ENCODE measurements at regions of chr10 and their contacts with region 1.

Region 1: GRCh38 chr10:104209575-104210198 is 22.5 kb downstream of the CFAP43 start:
- DNase-seq: no peak
- H3K4me3 ChIP-seq: no peak overlapping the region
- H3K27ac ChIP-seq: no peak overlapping the region
- H3K4me1 ChIP-seq: no peaks in the 10 kb centered on the region
- H3K27me3 ChIP-seq: no peaks in the 10 kb centered on the region
- CTCF ChIP-seq: peak; percentile 69

Region 2: DNA sequence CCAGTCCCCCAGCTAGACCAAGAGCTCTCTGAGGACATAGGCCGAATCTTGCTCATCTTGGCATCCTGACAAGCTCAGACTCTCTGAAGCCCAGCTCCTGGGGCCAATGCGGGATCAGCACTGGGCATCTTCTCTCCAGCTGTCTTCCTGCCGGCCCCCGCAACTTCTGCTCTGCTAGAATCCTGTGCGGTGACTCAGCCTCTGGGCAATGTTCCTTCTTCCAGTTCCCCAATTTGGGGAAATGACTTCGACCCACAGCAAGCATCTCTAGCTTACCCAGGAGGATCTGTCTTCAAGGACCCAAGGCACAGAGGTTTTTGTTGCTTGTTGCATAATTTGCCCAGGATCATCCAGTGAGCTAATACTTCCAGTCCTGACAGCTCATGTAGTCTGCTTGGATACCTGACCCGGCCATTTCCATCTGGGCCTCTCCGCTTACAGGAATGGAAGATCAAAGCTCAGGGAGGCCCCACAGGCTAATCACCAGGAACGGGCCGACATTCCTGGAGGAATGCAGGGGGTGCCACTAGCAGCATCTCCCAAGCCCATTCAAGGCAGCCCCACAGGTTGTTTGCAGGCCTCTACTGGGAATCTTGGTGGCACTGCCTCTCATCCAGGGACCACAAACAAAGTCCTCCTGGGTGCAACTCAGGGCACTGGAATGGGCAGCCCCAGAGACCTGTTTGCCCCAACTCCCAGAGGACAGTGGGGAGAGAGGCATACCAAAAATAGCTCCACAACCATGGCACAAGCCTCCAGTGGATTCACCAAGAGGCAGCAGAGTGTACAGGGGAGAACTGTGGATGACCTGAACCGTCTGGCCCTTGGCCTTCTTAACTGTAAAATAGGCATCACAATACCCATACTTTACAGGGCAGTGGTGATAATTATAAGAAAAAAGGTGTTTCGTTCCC is 564.3 kb before region 1 on chr10:
- intact Hi-C with region 1: no loop called
- DNase-seq: peak; percentile 53
- H3K4me3 ChIP-seq: no peak overlapping the region
- H3K27ac ChIP-seq: peak overlapping the region; percentile 44
- H3K4me1 ChIP-seq: peaks cover 75% of the 10 kb centered on the region
- H3K27me3 ChIP-seq: no peaks in the 10 kb centered on the region
- CTCF ChIP-seq: no peak

Region 3: GRCh38 chr10:104049497-104050250 is 160.0 kb before region 1 on chr10:
- intact Hi-C with region 1: loop called (anchors 10 kb)
- DNase-seq: no peak
- H3K4me3 ChIP-seq: no peak overlapping the region
- H3K27ac ChIP-seq: no peak overlapping the region
- H3K4me1 ChIP-seq: no peaks in the 10 kb centered on the region
- H3K27me3 ChIP-seq: no peaks in the 10 kb centered on the region
- CTCF ChIP-seq: no peak

Region 4: GRCh38 chr10:104268716-104269645 is 59.3 kb after region 1 on chr10 and contains the start of gene GSTO2:
- intact Hi-C with region 1: no loop called
- DNase-seq: peak; percentile 99
- H3K4me3 ChIP-seq: peak within 1 kb of the TSS; percentile 80
- H3K27ac ChIP-seq: peak within 1 kb of the TSS; percentile 86
- H3K4me1 ChIP-seq: peaks cover 26% of the 10 kb centered on the region
- H3K27me3 ChIP-seq: no peaks in the 10 kb centered on the region
- CTCF ChIP-seq: no peak
- total RNA-seq, gene GSTO2: 0.80 TPM